Head of caudate nucleus (tissue), 42 donors: ENCODE measurements at regions of chr9 and their contacts with region 1.

Region 1: DNA sequence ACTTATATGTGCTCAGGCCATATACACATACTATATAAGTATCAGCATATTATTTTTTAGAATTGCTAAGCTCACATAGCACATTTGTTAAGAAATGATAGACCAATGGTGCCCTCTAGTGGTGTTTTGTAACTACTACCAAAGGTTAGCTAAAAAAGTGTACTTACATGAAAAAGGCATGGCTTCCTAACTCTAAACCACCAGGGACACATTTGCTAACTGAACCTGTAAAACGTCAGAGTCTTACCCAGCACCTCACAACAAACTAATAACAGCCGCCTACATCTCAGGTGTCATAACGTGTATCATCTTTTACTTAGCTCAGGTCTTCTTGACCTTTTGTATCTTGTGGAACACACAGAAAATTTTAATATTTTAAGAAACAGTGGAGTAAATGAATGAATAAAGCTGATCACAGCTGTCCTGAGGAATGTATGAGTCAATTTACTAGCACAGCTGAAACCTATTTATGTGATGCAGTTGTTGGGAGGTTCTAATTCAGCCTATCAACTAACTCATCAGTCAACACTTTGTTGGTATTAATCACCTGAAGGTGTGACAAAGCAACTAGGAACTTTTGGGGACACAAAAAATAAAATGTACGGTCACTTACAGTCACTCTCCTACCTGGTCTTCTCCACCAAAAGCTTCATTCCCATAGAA is 72.9 kb downstream of the BAAT start:
- DNase-seq: peak in 9 of 42 donors; percentile 40 to 77 (median 61)

Region 2: DNA sequence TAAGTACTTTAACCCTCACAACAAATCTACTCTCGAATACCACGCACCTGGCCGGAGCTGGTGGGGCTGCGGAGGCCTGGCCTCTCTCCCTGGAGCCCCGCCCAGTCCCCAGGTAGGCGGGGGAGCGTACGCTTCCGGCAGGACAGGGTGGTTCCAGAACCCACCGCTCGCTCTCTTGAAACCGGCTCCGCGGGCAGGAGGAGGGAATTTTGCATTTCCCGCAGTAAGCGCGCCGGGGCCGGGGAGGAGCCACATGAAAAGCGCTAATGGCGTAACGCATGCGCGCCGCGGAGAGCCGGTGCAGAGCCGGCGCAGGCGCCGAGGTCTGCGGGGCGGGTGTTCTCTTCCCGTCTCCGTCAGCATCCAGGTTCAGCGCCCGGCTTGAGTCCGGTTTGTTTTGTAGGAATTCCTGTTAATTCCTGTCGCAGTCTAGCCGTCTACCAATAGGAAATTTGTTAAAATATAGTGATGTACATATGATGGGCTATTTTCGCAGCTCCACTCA is 713.2 kb before region 1 on chr9:
- intact Hi-C with region 1: loop called (anchors 10 kb)
- DNase-seq: peak; percentile 69 to 95 (median 88)

Region 3: DNA sequence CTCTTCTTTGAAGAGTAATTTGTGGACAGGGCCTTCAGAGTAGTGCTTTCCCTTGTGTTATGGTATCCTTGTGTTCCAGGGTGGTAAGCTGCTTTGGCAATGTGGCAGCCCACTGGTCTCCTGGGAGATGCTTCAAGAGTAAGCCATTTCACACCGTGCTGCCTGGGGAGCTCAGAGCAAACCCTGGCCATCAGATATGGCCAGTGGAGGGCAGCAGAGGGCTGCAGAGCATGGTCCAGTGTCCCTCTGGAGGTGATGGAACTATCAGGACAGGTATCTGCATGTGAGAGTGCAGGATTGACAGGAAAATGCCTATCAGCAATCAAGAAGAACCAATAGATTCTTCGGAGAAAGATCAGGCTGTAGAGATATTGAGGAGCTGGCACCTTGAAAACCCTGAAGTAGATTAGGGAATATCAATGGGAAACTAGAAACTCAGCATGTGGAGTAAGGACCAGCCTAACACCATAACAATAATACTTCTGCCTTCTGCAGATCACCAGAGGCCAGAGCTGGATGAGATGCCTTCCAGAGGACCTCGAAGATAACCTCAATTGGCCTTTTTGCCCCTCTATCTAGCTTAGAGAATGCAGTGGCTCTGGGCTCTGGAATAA is 192.6 kb before region 1 on chr9:
- intact Hi-C with region 1: loop called (anchors 5 kb)
- DNase-seq: peak; percentile 9 to 92 (median 73)

Region 4: GRCh38 chr9:101229606-101230005 is 82.3 kb before region 1 on chr9:
- intact Hi-C with region 1: no loop called
- DNase-seq: peak in 1 of 42 donors; percentile 19

Region 5: DNA sequence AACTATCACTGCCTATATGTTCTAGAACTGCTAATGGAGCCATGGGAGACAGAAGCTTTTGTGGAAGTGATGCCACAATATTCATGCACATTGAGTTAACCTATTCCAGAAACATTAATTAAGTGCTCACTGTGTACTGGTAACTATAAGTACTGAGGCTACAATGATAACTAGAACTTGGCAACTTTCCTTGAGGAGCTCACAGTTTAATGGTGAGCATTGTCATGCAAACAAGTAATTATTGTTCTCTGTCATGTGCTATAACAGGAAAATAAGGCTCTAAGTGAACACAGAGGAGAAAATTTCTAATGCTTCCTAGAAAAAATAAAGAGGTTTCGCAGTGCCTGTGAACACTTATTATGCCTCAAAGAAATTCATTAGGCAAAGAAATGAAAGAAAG is 69.2 kb before region 1 on chr9:
- intact Hi-C with region 1: loop called (anchors 5 kb)
- DNase-seq: peak in 3 of 42 donors; percentile 32 to 55 (median 33)

Region 6: DNA sequence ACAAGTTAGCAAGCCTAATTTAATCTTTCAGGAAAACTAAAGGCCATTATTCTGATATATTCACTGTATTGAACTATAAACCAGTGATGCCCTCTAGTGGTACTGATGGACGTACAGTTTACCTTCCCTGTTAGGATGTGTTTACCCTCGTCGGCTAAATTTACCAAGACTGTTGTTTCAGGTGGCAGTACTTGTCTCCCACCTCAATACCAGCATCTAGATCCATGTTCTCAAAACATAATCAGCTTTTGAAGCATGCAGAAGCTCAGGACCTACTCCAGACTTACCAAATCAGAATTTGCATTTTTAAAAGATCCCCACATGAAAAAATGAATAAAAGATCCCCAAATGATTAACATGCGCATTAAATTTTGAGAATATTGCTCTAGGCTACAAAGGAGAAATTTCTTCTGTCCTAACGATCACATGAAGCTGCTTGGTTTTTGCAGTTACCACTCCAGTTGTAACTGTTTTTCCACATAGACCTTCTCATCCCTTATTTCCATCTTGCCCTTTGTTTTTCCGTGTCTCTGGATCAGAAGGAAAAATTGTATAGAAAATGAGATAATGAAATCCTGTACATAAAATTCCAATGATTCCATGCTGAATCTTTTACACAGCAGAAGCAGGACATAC is 76.1 kb after region 1 on chr9:
- intact Hi-C with region 1: loop called (anchors 10 kb)
- DNase-seq: peak in 10 of 42 donors; percentile 13 to 64 (median 36)